ENCODE measurements at regions of chr3 and their contacts with region 1.

Region 1: DNA sequence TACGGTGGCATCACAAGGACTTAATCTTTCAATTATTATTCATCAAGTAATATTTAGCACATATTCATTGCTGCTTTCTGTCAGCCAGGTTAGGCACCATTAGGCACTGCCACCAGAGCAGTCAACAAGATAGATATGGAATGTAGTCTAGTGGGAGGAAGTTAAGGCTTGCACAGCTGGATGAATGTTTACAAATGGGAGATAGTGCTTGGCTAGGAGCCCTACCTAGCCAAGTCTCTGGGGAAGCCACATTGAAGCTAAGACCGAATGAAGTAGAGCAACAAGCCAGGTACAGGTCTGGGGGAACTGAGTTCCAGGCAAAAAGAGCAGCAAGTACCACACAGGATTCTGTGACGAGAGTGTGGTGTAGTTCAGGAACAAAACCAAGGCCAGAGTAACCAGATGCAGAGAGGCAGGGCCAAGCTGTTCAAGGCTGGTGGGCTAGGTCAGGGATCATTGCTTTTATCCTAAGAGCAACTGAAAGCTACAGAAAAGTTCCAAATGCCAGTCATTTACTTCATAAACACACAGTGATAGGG is 33.4 kb upstream of the SCAANT1 start:
- DNase-seq: no peak
- ATAC-seq: peak; percentile 59 to 77 (median 60)
- H3K4me3 ChIP-seq: no peak overlapping the region
- H3K27ac ChIP-seq: no peak overlapping the region
- H3K4me1 ChIP-seq: peaks cover 0 to 49% (median 18%) of the 10 kb centered on the region in 12 donors
- H3K27me3 ChIP-seq: no peaks in the 10 kb centered on the region
- CTCF ChIP-seq: no peak
- POLR2A ChIP-seq: no peak

Region 2: DNA sequence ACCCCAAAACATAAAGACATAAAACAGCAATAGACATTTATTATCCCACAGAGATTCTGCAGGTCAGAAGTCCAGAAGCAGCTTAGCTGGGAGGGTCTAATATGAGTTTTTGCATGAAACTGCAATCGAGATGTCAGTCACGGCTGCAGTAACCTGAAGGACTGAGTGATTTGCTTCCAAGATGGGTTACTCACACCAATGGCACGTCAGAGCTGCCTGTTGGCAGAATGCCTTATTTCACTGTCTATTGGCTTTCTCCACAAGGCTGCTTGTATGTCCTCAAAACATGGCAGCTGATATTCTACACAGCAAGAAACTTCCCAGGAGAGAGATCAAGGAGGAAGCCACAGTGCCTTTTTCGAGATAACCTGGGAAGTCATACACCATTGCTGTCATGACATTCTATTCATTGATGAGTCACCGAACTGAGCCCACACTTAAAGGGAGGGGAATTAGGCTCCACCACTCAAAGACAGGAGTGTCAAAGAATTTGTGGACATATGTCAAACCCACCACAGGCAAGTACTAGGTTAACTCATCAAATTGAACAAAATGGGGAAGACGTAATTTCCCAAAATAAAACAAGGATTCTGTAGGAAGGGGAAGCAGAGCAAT is 545.3 kb before region 1 on chr3:
- intact Hi-C with region 1: no loop called
- DNase-seq: no peak
- ATAC-seq: no peak
- H3K4me3 ChIP-seq: no peak overlapping the region
- H3K27ac ChIP-seq: no peak overlapping the region
- H3K4me1 ChIP-seq: no peaks in the 10 kb centered on the region
- H3K27me3 ChIP-seq: peaks cover 0 to 4% (median 0%) of the 10 kb centered on the region in 9 donors
- CTCF ChIP-seq: no peak
- POLR2A ChIP-seq: no peak

Region 3: GRCh38 chr3:64289622-64290021 is 344.0 kb after region 1 on chr3:
- intact Hi-C with region 1: loop called in 1 of 10 experiments (anchors 5 kb)
- DNase-seq: no peak
- ATAC-seq: no peak
- H3K4me3 ChIP-seq: no peak overlapping the region
- H3K27ac ChIP-seq: no peak overlapping the region
- H3K4me1 ChIP-seq: peaks cover 0 to 5% (median 0%) of the 10 kb centered on the region in 12 donors
- H3K27me3 ChIP-seq: no peaks in the 10 kb centered on the region
- CTCF ChIP-seq: no peak
- POLR2A ChIP-seq: no peak

Measured in heart left ventricle (tissue), 16 donors.